A673 (cell line): ENCODE measurements at regions of chr18 and their contacts with region 1.

Region 1: GRCh38 chr18:34787931-34788532 is 77.9 kb downstream of the DTNA start:
- DNase-seq: peak; percentile 80
- H3K4me3 ChIP-seq: no peak overlapping the region
- H3K27ac ChIP-seq: no peak overlapping the region
- H3K4me1 ChIP-seq: peaks cover 7% of the 10 kb centered on the region
- H3K27me3 ChIP-seq: no peaks in the 10 kb centered on the region
- CTCF ChIP-seq: peak; percentile 77

Region 2: DNA sequence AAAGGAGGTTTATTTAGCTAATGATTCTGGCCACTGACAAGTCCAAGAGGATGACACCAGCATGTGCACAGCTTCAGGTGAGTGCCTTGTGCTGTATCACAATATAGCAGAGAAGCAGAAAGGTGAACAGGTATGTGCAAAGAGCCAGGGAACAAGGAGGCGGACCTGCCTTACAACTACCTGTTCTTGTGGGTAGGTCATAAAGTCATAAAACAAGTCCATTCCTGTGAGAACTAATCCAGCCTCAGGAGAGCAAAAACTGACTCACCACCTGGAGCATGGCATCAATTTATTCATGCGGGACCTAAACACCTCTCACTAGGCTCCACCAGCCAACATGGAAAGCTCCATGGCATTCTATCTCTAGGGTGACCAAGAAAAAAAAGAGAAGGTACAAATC is 975.8 kb before region 1 on chr18:
- CTCF ChIA-PET with region 1: no interaction called
- POLR2A ChIA-PET with region 1: no interaction called
- intact Hi-C with region 1: no loop called
- DNase-seq: no peak
- H3K4me3 ChIP-seq: no peak overlapping the region
- H3K27ac ChIP-seq: no peak overlapping the region
- H3K4me1 ChIP-seq: no peaks in the 10 kb centered on the region
- H3K27me3 ChIP-seq: peaks cover 3% of the 10 kb centered on the region
- CTCF ChIP-seq: no peak

Region 3: GRCh38 chr18:33839441-33840211 is 948.4 kb before region 1 on chr18:
- CTCF ChIA-PET with region 1: no interaction called
- POLR2A ChIA-PET with region 1: no interaction called
- intact Hi-C with region 1: loop called (anchors 10 kb)
- DNase-seq: peak; percentile 84
- H3K4me3 ChIP-seq: no peak overlapping the region
- H3K27ac ChIP-seq: no peak overlapping the region
- H3K4me1 ChIP-seq: peaks cover 18% of the 10 kb centered on the region
- H3K27me3 ChIP-seq: no peaks in the 10 kb centered on the region
- CTCF ChIP-seq: peak; percentile 87

Region 4: GRCh38 chr18:34322365-34323289 is 465.4 kb before region 1 on chr18:
- CTCF ChIA-PET with region 1: no interaction called
- POLR2A ChIA-PET with region 1: no interaction called
- intact Hi-C with region 1: loop called (anchors 10 kb)
- DNase-seq: peak; percentile 87
- H3K4me3 ChIP-seq: no peak overlapping the region
- H3K27ac ChIP-seq: no peak overlapping the region
- H3K4me1 ChIP-seq: peaks cover 4% of the 10 kb centered on the region
- H3K27me3 ChIP-seq: no peaks in the 10 kb centered on the region
- CTCF ChIP-seq: peak; percentile 95

Region 5: GRCh38 chr18:34595673-34596303 is 192.2 kb before region 1 on chr18:
- CTCF ChIA-PET with region 1: interaction called, 5 read pairs
- POLR2A ChIA-PET with region 1: no interaction called
- intact Hi-C with region 1: loop called (anchors 1 kb)
- DNase-seq: peak; percentile 52
- H3K4me3 ChIP-seq: no peak overlapping the region
- H3K27ac ChIP-seq: no peak overlapping the region
- H3K4me1 ChIP-seq: no peaks in the 10 kb centered on the region
- H3K27me3 ChIP-seq: no peaks in the 10 kb centered on the region
- CTCF ChIP-seq: peak; percentile 62

Region 6: DNA sequence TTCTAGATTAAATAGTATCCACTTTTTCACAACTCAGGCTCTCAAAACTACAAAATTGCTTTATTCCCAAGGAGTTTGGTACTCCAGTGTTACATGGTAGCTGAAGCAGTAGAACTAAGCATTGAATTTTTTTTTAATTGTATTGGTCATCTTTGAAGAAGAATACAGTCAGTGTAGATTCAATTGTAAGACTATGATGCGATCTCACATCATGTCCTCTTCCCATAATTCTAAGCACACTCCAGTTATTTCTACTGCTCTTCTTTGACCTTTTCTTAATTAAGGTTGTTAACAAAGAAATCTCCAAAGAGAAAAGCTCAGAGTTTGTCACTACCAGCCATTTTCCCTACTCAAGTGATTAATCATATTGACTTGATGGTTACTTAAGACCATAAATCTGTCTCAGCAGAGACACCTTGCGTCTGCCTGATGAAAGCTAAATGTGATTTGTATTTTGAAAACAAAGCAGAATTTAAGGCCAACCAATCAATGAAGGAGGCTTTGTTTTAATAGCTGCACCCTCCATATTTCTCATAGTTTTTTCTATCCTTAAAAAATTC is 52.3 kb after region 1 on chr18:
- CTCF ChIA-PET with region 1: no interaction called
- POLR2A ChIA-PET with region 1: no interaction called
- intact Hi-C with region 1: loop called (anchors 5 kb)
- DNase-seq: no peak
- H3K4me3 ChIP-seq: no peak overlapping the region
- H3K27ac ChIP-seq: no peak overlapping the region
- H3K4me1 ChIP-seq: peaks cover 5% of the 10 kb centered on the region
- H3K27me3 ChIP-seq: no peaks in the 10 kb centered on the region
- CTCF ChIP-seq: no peak